ENCODE measurements at regions of chr6 and their contacts with region 1.

Region 1: DNA sequence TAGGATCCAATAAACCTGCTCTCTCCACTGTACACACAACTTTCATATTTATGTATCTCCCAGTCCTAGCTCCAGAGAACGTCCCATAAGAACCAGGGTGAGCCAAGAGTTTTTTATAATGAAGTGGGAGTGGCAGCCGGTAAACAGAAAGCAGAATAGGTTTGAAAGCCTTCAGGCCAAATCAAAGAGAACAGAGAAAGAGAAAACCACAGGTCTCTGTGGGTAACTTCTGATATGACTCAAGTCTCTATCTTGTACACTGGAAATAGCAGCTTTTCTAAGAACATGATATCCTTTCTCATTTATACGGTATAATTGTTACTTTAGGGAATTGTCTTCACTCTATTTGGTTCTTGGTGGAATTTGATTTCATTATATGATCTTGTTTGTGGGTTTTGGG is 273.6 kb downstream of the PACRG start:
- DNase-seq: no peak
- ATAC-seq: no peak
- H3K4me3 ChIP-seq: no peak overlapping the region
- H3K27ac ChIP-seq: no peak overlapping the region
- H3K4me1 ChIP-seq: no peaks in the 10 kb centered on the region
- H3K27me3 ChIP-seq: no peaks in the 10 kb centered on the region
- CTCF ChIP-seq: no peak
- POLR2A ChIP-seq: no peak

Region 2: DNA sequence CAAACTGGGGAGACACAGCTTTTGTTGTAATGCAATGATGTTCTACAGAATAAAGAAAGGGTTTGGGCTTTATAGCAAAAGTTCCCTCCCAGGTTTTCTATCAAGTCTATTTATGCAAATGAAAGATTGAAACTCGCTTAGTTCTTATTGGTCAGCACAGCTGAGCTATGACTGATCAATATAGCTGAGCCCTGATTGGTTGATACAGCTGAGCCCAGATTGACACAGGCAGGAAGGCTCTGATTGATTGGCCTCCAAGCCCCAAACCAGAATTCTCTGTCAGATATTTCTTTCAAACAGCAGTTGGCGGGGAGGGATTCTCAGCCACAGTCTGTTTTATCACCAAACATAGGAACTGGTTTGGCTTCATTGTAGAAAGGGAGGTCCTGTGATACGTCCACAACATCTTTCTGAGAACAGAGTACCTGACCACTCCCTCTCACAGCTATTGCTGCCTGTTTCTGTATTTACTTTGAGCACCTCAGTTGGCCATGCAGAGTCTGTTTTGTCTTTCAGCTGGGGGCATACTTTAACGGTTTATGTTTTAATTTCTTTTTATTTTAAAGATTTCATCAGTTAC is 50.1 kb before region 1 on chr6:
- in situ Hi-C with region 1: no loop called
- intact Hi-C with region 1: loop called (anchors 10 kb)
- DNase-seq: no peak
- ATAC-seq: no peak
- H3K4me3 ChIP-seq: no peak overlapping the region
- H3K27ac ChIP-seq: no peak overlapping the region
- H3K4me1 ChIP-seq: no peaks in the 10 kb centered on the region
- H3K27me3 ChIP-seq: no peaks in the 10 kb centered on the region
- CTCF ChIP-seq: no peak
- POLR2A ChIP-seq: no peak

Region 3: DNA sequence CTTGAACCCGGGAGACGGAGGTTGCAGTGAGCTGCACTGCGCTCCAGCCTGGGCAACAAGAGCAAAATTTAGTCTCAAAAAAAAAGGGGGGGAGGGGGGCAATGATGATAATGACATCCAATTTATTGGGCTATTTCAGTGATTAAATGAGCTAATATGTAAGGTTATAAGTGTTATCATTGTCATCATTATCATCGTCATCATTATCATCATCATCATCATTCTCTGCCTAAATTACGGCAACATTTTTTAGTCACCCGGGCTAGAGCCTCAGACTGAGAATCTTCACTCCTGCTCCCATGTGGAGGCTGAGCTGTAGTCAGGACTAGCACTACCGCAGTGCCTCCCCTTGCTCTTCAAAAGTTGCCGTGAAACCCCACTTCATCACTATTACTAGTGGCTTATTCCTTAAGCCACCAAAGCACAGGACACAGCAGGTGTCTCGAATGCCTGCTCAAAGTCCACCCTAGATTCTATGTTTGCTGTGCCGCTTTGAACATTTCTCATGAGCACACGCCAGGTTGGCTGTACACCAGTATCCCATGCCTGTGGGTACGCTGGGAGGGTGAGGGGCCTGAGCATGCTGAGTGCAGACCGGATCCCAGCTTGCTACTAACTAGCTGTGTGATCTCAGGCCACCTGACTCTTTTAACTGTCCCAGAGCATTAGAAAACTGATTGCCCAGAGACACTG is 77.2 kb after region 1 on chr6:
- in situ Hi-C with region 1: no loop called
- intact Hi-C with region 1: no loop called
- DNase-seq: no peak
- ATAC-seq: no peak
- H3K4me3 ChIP-seq: no peak overlapping the region
- H3K27ac ChIP-seq: no peak overlapping the region
- H3K4me1 ChIP-seq: no peaks in the 10 kb centered on the region
- H3K27me3 ChIP-seq: no peaks in the 10 kb centered on the region
- CTCF ChIP-seq: no peak
- POLR2A ChIP-seq: no peak